ENCODE measurements at regions of chr5 and their contacts with region 1.

Region 1: DNA sequence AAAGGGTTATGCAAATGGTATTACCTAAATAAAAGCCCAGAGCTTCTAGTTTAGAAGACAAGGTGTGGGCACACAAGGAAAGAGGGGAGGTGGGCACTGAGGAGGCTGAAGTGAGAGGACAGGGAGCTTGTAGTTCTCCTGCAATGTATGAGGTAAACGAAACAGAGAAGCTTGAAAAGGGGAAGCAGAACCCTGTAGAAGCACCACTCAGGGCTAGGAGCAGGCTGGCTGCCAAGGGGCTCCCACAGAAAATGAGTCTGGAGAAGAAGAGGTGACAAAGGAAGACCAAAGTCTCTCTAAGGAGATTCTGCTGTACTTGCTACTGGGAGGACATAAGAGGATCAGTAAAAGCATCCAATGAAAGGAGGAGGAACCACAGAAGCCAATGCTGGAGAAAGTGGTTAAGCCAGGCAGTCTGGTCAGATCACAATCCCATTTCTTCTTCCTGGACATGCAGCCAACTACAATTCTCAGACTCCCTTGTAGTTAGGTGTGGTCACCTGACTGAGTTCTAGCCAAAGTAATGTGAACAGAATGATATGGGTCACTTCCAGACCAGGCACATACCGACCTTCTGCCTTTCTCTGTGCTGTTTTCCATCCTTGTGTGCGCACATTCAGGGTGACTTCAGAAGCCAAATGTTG is 174.5 kb upstream of the MAP3K1 start:
- DNase-seq: peak in 4 of 5 donors; percentile 26 to 74 (median 48)
- ATAC-seq: peak in 2 of 4 donors; percentile 52 to 74
- H3K4me3 ChIP-seq: no peak overlapping the region
- H3K27ac ChIP-seq: no peak overlapping the region
- H3K4me1 ChIP-seq: peaks cover 0 to 25% (median 0%) of the 10 kb centered on the region in 12 donors
- H3K27me3 ChIP-seq: no peaks in the 10 kb centered on the region
- CTCF ChIP-seq: no peak
- POLR2A ChIP-seq: no peak

Region 2: DNA sequence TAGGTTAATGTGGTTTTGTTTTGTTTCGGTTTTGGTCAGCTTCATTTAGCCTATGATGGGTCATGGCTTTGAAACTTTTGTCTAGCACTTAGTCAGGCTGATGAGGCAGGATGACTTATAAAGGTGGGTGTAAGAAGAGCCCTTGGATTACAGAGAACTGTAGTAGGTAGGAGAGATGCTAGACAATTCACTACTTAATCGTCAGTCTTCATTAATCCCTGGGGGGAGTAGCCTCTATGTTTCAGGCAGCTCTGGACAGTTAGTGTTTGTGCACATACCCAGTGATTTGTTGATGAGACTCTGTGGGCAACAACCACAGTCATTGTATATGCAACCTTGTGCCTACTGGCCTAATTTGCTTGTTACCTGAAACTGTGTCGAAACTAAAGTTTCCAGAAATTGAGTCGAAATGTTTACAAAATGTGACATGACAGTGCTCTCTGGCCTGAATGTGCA is 1219.8 kb before region 1 on chr5:
- intact Hi-C with region 1: loop called in 1 of 10 experiments (anchors 10 kb)
- DNase-seq: no peak
- ATAC-seq: no peak
- H3K4me3 ChIP-seq: no peak overlapping the region
- H3K27ac ChIP-seq: peak overlapping the region in 3 of 12 donors; percentile 18 to 46 (median 21)
- H3K4me1 ChIP-seq: peaks cover 0 to 43% (median 15%) of the 10 kb centered on the region in 12 donors
- H3K27me3 ChIP-seq: no peaks in the 10 kb centered on the region
- CTCF ChIP-seq: no peak
- POLR2A ChIP-seq: no peak

Region 3: DNA sequence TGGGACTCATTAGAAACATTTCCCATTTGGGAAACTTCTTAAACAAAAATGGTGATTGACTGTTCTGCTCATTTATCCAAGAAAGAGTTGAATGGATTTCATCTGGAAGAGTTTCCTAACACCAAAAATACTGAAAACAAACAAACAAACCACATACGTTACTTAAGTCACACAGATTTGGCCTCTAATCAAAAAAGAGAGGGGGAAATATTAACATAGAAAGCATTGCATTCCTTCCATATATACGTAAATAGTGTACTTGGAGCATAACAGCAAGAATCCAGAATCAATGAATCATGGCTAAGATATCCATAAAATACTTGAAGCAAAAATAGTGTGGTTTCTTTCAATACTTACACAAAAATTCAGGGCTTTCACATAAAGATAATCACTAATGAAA is 15.3 kb before region 1 on chr5:
- intact Hi-C with region 1: loop called in 1 of 10 experiments (anchors 1 kb)
- DNase-seq: no peak
- ATAC-seq: no peak
- H3K4me3 ChIP-seq: no peak overlapping the region
- H3K27ac ChIP-seq: no peak overlapping the region
- H3K4me1 ChIP-seq: no peaks in the 10 kb centered on the region
- H3K27me3 ChIP-seq: no peaks in the 10 kb centered on the region
- CTCF ChIP-seq: no peak
- POLR2A ChIP-seq: no peak